ENCODE measurements at regions of chr11 and their contacts with region 1.

Region 1: DNA sequence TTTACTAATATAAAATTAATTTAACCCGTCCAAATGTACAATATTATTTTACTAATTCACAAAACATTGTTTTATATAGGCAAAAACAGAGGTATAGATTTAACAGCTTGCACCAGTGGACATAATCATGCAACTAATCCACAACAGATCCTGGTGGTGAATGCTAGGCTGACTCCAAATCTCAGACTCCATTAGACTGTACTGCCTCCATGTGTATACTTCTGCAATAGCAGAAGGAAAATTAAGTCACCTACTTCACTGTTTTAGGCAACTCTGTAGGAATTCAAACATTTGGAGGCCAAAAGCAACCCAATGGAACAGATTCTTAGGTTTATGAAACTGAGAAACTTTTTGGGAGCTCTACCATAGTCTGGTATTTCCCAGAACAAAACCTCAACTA is 30.0 kb upstream of the RAB39A start:
- DNase-seq: peak; percentile 20
- H3K4me3 ChIP-seq: no peak overlapping the region
- H3K27ac ChIP-seq: no peak overlapping the region
- H3K27me3 ChIP-seq: no peaks in the 10 kb centered on the region
- CTCF ChIP-seq: peak; percentile 76

Region 2: GRCh38 chr11:107705027-107705426 is 193.2 kb before region 1 on chr11:
- CTCF ChIA-PET with region 1: no interaction called
- POLR2A ChIA-PET with region 1: no interaction called
- DNase-seq: peak; percentile 34
- H3K4me3 ChIP-seq: no peak overlapping the region
- H3K27ac ChIP-seq: no peak overlapping the region
- H3K27me3 ChIP-seq: no peaks in the 10 kb centered on the region
- CTCF ChIP-seq: no peak

Region 3: DNA sequence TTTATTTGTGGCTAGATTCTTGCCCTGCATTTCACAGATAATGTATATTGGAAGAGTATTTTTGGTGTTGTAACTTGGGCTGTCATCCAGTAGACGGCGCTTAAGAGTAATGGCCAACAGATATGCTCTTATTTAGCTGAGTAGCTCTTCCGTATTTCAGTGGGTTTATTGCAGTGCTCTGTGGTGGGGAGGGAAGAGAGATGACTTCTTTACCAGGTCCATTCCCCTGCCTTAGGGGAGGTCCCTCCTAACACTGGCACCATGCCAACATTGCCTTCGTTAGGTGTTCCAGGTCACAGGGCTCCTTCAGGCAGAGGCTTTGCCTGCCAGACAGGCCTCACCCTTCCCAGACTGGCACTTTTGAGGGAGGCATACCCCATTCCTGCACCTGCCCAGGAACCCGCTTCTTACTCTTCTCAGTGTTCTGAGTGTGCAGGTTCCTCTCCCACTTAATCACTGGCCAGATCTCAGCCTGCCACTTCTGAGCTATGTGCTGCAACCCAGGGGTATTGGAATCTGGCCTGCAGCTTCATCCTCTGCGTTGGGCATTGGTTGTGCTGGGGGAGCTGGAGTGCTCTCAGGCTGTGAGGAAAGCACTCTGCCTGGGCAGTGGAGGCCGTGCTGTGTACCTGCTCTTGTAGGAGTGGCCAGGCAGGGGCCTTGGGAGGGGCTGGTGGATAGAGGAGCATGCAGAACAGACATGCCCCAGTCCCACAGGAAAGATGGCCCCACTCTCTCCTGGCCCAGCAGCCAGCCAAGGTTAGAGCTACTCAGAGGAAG is 157.0 kb before region 1 on chr11:
- CTCF ChIA-PET with region 1: interaction called, 14 read pairs
- POLR2A ChIA-PET with region 1: no interaction called
- DNase-seq: peak; percentile 13
- H3K4me3 ChIP-seq: no peak overlapping the region
- H3K27ac ChIP-seq: no peak overlapping the region
- H3K27me3 ChIP-seq: peaks cover 6% of the 10 kb centered on the region
- CTCF ChIP-seq: peak; percentile 80

Measured in AG04450 (cell line).